Common myeloid progenitor, CD34-positive (primary cell): ENCODE measurements at regions of chr22 and their contacts with region 1.

Region 1: DNA sequence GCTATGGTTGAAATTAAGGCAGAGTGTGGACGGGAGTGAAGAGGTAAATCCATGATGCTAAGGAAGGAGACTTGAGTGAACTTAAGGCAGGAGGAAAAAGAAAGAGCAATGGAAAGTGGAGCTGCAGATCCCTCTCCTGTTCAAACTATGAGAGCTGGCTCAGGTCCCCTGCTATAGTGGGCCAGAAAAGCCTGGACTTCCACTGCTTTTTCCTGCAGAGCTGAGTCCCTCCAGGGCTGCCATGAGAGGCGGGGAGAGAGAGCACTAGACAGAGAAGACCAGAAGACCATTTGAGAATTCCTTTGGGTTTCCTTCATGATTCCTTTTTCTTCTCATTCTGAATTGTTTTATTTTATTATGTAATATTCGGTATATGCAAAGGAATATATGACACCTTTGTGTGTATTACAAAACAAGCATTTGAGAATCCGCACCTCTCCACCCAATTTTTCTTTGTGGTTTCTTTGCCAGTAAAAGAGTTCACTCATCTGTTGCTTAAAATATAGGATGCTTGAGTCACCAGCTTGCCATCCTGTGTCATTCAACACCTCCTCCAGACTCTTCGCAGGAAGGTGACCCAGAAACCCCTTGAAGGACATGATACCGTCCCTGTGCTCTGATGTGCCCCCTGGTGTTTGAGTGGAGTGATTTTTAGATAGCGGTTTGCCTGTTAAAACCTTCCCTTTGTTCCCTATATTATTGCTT is 24.4 kb downstream of the SREBF2 start:
- DNase-seq: peak; percentile 77 to 87 (median 83)
- H3K4me3 ChIP-seq: no peak overlapping the region
- H3K27ac ChIP-seq: no peak overlapping the region
- H3K4me1 ChIP-seq: peaks cover 7 to 49% (median 24%) of the 10 kb centered on the region in 4 experiments
- H3K27me3 ChIP-seq: no peaks in the 10 kb centered on the region

Region 2: GRCh38 chr22:41822317-41823060 is 34.8 kb before region 1 on chr22:
- CTCF ChIA-PET with region 1: interaction called, 11 read pairs
- POLR2A ChIA-PET with region 1: interaction called, 3 read pairs
- DNase-seq: peak; percentile 75 to 86 (median 85)
- H3K4me3 ChIP-seq: no peak overlapping the region
- H3K27ac ChIP-seq: no peak overlapping the region
- H3K4me1 ChIP-seq: peaks cover 0 to 3% (median 0%) of the 10 kb centered on the region in 4 experiments
- H3K27me3 ChIP-seq: no peaks in the 10 kb centered on the region

Region 3: GRCh38 chr22:41841085-41841659 is 16.1 kb before region 1 on chr22:
- CTCF ChIA-PET with region 1: interaction called, 11 read pairs
- POLR2A ChIA-PET with region 1: interaction called, 4 read pairs
- DNase-seq: no peak
- H3K4me3 ChIP-seq: no peak overlapping the region
- H3K27ac ChIP-seq: no peak overlapping the region
- H3K4me1 ChIP-seq: peaks cover 0 to 33% (median 8%) of the 10 kb centered on the region in 4 experiments
- H3K27me3 ChIP-seq: no peaks in the 10 kb centered on the region

Region 4: GRCh38 chr22:41870786-41871185 is 13.5 kb after region 1 on chr22:
- CTCF ChIA-PET with region 1: interaction called, 10 read pairs
- POLR2A ChIA-PET with region 1: no interaction called
- DNase-seq: no peak
- H3K4me3 ChIP-seq: no peak overlapping the region
- H3K27ac ChIP-seq: no peak overlapping the region
- H3K4me1 ChIP-seq: no peaks in the 10 kb centered on the region
- H3K27me3 ChIP-seq: no peaks in the 10 kb centered on the region

Region 5: GRCh38 chr22:41998361-41999275 is 141.3 kb after region 1 on chr22 and contains the start of gene WBP2NL:
- CTCF ChIA-PET with region 1: no interaction called
- POLR2A ChIA-PET with region 1: no interaction called
- DNase-seq: peak; percentile 85 to 91 (median 91)
- H3K4me3 ChIP-seq: peak within 1 kb of the TSS; percentile 38 to 84 (median 59)
- H3K27ac ChIP-seq: no peak within 1 kb of the TSS
- H3K4me1 ChIP-seq: peaks cover 0 to 10% (median 0%) of the 10 kb centered on the region in 4 experiments
- H3K27me3 ChIP-seq: peaks cover 0 to 5% (median 0%) of the 10 kb centered on the region in 5 experiments